ENCODE measurements at regions of chr5 and their contacts with region 1.

Region 1: DNA sequence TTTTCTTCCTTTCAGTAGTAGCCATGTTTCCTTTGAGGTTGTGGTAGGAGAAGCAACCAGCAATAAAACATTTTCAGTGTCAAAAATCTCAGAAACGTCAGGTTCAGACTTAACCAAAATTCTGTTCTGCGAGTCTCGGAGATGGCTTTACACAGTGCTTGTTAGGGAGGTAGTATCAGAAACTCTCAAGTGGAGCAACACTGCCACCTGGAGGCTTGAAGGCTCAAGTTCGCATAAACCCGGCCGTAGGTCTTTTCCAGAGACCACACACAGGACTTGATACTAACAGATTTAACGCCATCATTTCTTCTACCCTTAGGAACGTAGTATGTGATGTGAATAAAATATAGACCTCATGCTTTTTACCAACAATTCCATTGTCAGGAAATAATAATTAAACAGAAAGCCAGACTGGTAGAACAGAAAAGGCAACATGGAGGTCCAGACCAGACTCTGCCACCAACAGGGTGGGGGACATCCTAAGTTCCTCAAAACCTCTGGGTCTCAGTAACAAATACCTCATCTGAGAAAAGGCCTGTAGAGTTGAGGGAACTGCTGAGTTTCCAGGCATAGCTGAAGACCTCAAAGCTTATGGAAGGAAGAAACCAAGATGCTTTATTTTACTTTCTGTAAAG is 8.5 kb downstream of the PTGER4 start:
- DNase-seq: peak; percentile 64 to 87 (median 76)
- ATAC-seq: peak; percentile 73 to 92 (median 82)
- H3K4me3 ChIP-seq: peak overlapping the region in 1 of 4 donors; percentile 88
- H3K27ac ChIP-seq: peak overlapping the region in 2 of 4 donors; percentile 1 to 93
- H3K4me1 ChIP-seq: peaks cover 0 to 36% (median 14%) of the 10 kb centered on the region in 3 donors
- H3K27me3 ChIP-seq: no peaks in the 10 kb centered on the region
- CTCF ChIP-seq: peak; percentile 63 to 87 (median 76)

Region 2: GRCh38 chr5:39948867-39949468 is 739.3 kb before region 1 on chr5:
- intact Hi-C with region 1: loop called in 2 of 3 experiments (anchors 5 to 10 kb)
- DNase-seq: peak in 4 of 6 donors; percentile 18 to 71 (median 62)
- ATAC-seq: peak; percentile 94 to 99 (median 97)
- H3K4me3 ChIP-seq: no peak overlapping the region
- H3K27ac ChIP-seq: no peak overlapping the region
- H3K4me1 ChIP-seq: peaks cover 0 to 15% (median 0%) of the 10 kb centered on the region in 3 donors
- H3K27me3 ChIP-seq: no peaks in the 10 kb centered on the region
- CTCF ChIP-seq: peak; percentile 33 to 64 (median 56)

Region 3: DNA sequence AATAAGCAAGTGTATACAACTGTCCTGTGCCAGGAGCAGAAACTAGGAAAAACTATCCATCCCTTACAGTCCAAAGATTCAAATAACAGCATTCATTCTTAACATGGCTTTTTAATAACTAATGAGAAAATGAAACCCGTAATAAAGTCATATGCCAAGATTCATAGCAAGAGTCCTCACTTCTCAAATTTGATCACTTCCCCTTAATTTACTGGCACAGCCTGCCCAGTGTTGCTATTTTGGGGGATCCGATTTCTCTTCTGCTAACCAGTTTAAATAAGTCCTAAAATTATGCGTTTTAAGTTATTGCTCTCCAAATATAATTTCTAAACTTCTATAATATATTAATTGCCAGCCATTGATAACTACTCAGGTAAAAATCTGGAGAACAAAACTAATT is 185.5 kb before region 1 on chr5:
- intact Hi-C with region 1: no loop called
- DNase-seq: no peak
- ATAC-seq: peak in 2 of 4 donors; percentile 53 to 66
- H3K4me3 ChIP-seq: no peak overlapping the region
- H3K27ac ChIP-seq: no peak overlapping the region
- H3K4me1 ChIP-seq: no peaks in the 10 kb centered on the region
- H3K27me3 ChIP-seq: no peaks in the 10 kb centered on the region
- CTCF ChIP-seq: no peak